Activated CD4-positive, alpha-beta memory T cell treated with anti-CD3 and anti-CD28 coated beads for 36 hours (primary cell): ENCODE measurements at regions of chr17 and their contacts with region 1.

Region 1: DNA sequence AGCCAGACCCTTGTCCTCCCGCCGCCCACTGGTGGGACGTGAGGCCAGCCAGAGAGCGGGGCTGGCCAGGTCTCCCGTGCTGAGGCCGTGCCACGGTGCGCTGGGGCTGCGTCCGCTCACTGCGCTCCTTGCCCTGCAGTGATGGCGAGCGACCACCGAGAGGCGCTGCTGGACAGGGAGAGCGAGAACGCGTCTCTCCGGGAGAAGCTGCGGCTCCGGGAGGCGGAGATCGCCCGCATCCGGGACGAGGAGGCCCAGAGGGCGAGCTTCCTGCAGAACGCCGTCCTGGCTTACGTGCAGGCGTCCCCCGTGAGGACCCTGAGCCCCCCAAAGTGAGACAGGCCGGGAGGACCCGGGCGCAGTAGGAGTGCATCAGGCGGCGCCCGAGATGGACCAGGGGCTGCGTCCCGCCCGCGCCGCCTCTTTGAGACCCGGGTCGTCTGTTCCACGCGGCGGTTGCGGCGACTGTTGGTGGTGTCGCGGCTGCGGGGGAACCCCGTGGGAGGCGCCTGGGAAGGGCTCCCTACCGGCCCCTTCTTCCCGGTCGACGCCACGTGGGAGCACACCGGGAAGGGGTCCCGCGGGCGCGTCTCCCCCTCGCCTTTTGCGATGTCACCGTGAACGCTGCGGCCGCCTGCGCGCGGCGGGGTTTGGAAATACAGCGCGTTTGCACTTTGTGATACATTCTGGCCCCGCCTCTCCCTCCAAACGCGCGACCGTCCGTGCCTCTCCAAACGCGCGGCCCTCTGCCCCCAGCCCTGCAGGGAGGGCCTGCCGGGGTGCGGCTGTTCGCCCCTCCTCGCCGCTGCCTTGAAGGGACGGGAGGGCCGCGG is 792 bp upstream of the RAC3 start:
- DNase-seq: peak; percentile 89
- H3K4me3 Mint-ChIP-seq: peak overlapping the region; percentile 76
- H3K27ac Mint-ChIP-seq: no peak overlapping the region
- H3K4me1 Mint-ChIP-seq: peaks cover 13% of the 10 kb centered on the region
- H3K27me3 Mint-ChIP-seq: no peaks in the 10 kb centered on the region

Region 2: GRCh38 chr17:82050761-82051641 is 20.3 kb after region 1 on chr17:
- CTCF ChIA-PET with region 1: interaction called, 10 read pairs
- POLR2A ChIA-PET with region 1: no interaction called
- intact Hi-C with region 1: no loop called
- DNase-seq: no peak
- H3K4me3 Mint-ChIP-seq: peak overlapping the region; percentile 83
- H3K27ac Mint-ChIP-seq: no peak overlapping the region
- H3K4me1 Mint-ChIP-seq: peaks cover 21% of the 10 kb centered on the region
- H3K27me3 Mint-ChIP-seq: no peaks in the 10 kb centered on the region

Region 3: DNA sequence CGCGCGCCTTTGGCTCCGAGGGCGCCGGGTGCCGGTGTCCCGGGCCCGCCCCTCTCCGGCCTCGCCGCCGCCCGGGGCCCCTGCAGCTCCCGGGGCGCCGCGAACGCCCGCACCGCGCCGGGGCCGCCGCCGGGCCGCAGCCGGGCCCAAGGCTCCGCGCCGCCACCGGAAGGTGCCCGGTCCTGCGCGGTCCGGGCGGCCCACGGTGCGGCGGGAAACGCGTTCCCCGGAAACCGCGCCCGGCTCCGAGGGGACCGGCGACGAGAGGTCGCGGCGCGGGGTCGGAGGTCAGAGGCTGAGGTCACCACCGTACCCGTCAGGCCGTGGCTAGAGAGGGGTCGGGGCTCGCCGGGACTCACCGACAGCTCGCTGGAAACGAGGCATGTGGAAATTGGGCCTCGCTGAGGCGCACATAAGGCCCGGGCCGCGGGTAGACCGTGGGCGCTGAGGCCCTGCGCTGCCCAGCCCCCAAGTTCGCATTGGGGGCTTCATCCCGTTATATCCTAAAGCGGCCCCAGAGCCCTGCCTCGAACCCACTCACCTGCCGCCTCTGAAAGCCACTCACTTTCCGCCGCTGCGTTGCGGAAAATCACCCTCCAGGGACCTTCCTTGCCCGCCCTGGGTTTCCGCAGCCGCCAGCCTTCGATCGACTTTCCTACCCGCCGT is 35.1 kb after region 1 on chr17 and contains the start of gene DUS1L:
- CTCF ChIA-PET with region 1: interaction called, 17 read pairs
- POLR2A ChIA-PET with region 1: interaction called, 5 read pairs
- intact Hi-C with region 1: no loop called
- DNase-seq: peak; percentile 78
- H3K4me3 Mint-ChIP-seq: peak within 1 kb of the TSS; percentile 85
- H3K27ac Mint-ChIP-seq: peak within 1 kb of the TSS; percentile 82
- H3K4me1 Mint-ChIP-seq: peaks cover 9% of the 10 kb centered on the region
- H3K27me3 Mint-ChIP-seq: no peaks in the 10 kb centered on the region
- total RNA-seq, gene DUS1L: 118 to 131 TPM

Region 4: GRCh38 chr17:82105882-82106687 is 75.4 kb after region 1 on chr17:
- CTCF ChIA-PET with region 1: interaction called, 14 read pairs
- POLR2A ChIA-PET with region 1: no interaction called
- intact Hi-C with region 1: no loop called
- DNase-seq: peak; percentile 78
- H3K4me3 Mint-ChIP-seq: peak overlapping the region; percentile 89
- H3K27ac Mint-ChIP-seq: peak overlapping the region; percentile 96
- H3K4me1 Mint-ChIP-seq: peaks cover 29% of the 10 kb centered on the region
- H3K27me3 Mint-ChIP-seq: no peaks in the 10 kb centered on the region

Region 5: DNA sequence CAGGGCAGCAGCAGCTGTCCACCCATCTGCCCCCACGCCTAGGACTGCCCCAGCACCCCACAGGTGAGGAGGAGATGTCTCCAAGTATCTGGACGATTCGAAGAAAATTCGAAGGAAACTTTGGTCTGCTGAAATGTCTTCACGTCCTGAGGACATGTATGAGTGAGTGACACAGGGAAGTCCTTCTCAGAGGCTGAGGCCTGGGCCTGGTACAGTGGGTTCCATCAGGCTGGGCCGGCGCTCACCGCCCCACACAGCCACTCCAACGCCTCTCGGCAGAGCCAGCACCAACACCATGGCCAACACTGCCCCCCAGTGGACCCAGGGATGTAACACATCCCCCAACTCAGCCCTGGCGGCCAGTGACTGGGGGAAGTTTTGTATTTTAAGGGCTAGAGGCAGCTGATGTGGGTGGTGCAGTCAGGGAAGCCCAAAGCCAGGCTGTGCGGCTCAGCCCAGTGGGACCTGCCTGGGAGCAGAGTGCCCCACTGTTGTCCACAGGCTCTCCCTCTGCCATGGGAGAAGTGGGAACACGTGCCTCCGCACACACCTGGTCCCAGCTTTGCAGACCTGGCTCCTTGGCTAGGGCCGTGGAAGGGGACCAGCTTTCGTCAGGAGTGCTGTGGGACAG is 123.2 kb after region 1 on chr17:
- CTCF ChIA-PET with region 1: interaction called, 54 read pairs
- POLR2A ChIA-PET with region 1: no interaction called
- intact Hi-C with region 1: loop called (anchors 1 kb)
- DNase-seq: peak; percentile 87
- H3K4me3 Mint-ChIP-seq: no peak overlapping the region
- H3K27ac Mint-ChIP-seq: no peak overlapping the region
- H3K4me1 Mint-ChIP-seq: peaks cover 4% of the 10 kb centered on the region
- H3K27me3 Mint-ChIP-seq: no peaks in the 10 kb centered on the region